ENCODE measurements at regions of chr19 and their contacts with region 1.

Region 1: DNA sequence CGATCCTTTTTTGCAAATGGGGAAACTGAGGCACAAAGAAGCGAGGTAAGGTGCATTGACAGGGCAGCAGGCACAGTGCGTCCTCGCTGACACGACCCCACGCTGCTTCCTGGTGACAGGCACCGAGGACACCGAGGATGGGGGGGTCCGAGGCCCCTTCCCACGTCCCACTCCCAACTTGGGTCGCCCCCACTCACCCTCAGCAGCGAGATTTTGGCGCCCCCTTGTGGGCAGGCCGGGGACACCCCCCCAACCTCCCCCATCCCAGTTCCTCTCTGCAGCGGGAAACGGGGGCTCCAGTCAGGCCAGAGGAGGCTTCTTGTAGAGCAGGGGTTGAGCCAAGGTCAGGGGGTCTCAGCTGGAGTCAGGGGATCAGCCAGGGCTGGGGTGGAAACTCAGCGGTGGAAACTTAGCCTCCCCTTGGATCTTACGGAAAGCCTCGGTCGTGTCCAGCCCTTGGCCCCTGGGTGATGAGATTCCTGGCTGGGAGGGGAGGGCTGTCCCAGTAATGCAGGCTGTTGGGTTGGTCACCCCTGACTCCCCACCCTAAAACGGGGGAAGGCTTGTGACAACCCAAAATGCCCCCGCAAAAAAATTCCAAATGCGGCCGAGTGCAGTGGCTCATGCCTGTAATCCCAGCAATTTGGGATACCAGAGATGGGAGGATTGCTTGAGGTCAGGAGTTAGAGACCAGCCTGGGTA is 8.2 kb downstream of the SMIM24 start:
- DNase-seq: peak in 2 of 3 donors; percentile 49 to 61
- ATAC-seq: peak; percentile 37
- H3K4me3 ChIP-seq: no peak overlapping the region
- H3K4me1 ChIP-seq: peaks cover 10% of the 10 kb centered on the region
- CTCF ChIP-seq: peak; percentile 62

Region 2: GRCh38 chr19:3304871-3305423 is 167.2 kb before region 1 on chr19:
- intact Hi-C with region 1: loop called (anchors 5 kb)
- DNase-seq: peak in 2 of 3 donors; percentile 80 to 82
- ATAC-seq: peak; percentile 85
- H3K4me3 ChIP-seq: no peak overlapping the region
- H3K4me1 ChIP-seq: peaks cover 6% of the 10 kb centered on the region
- CTCF ChIP-seq: peak; percentile 83

Region 3: DNA sequence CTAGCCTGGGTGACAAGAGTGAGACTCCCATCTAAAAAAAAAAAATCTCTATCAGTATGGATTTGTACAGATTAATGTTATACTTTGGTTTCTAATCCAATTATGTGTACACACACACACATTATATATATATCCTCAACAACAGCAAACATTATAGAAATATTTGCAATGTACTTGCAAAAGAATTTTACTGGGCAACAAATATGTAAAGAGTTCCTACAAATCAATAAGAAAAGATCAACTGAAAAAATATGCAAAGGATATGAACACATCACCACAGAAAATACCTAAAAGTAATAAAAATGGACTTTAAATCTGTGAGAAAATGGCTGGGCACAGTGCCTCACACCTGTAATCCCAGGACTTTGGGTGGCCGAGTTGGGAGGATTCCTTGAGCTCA is 146.7 kb before region 1 on chr19:
- intact Hi-C with region 1: loop called in 1 of 2 experiments (anchors 5 kb)
- DNase-seq: no peak
- ATAC-seq: no peak
- H3K4me3 ChIP-seq: no peak overlapping the region
- H3K4me1 ChIP-seq: no peaks in the 10 kb centered on the region
- CTCF ChIP-seq: no peak

Measured in mucosa of descending colon (tissue), 3 donors.